B cell (primary cell): ENCODE measurements at regions of chr20 and their contacts with region 1.

Region 1: DNA sequence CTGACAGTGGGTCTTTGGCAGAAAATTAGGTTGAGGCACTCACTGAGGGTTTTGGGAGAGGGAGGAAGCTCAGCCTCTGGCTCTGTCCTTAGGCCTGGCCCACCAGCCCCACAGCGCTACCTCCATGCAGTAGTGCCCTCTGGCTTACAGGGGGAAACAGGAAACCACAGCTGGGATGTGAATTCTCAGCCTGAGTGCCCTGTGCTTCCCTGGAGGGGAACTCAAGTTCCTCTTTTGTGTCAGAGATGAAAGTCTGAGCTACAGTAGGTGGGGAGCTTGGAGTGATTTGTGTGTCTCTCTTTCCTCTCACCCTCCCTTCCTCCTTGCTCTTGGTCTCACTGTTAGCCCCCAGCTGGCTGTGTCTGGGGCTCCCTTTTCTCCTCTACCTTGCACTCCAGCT is 48.2 kb upstream of the BLCAP start:
- DNase-seq: peak; percentile 51
- ATAC-seq: peak; percentile 65
- H3K4me3 ChIP-seq: no peak overlapping the region
- H3K4me3 Mint-ChIP-seq: no peak overlapping the region
- H3K27ac ChIP-seq: peak overlapping the region in 1 of 2 donors; percentile 4
- H3K27ac Mint-ChIP-seq: no peak overlapping the region
- H3K4me1 ChIP-seq: peaks cover 19 to 20% of the 10 kb centered on the region in 2 donors
- H3K4me1 Mint-ChIP-seq: peaks cover 26% of the 10 kb centered on the region
- H3K27me3 ChIP-seq: peaks cover 0 to 9% (median under 1%) of the 10 kb centered on the region in 4 experiments
- H3K27me3 Mint-ChIP-seq: peaks cover 13% of the 10 kb centered on the region
- CTCF ChIP-seq: no peak

Region 2: DNA sequence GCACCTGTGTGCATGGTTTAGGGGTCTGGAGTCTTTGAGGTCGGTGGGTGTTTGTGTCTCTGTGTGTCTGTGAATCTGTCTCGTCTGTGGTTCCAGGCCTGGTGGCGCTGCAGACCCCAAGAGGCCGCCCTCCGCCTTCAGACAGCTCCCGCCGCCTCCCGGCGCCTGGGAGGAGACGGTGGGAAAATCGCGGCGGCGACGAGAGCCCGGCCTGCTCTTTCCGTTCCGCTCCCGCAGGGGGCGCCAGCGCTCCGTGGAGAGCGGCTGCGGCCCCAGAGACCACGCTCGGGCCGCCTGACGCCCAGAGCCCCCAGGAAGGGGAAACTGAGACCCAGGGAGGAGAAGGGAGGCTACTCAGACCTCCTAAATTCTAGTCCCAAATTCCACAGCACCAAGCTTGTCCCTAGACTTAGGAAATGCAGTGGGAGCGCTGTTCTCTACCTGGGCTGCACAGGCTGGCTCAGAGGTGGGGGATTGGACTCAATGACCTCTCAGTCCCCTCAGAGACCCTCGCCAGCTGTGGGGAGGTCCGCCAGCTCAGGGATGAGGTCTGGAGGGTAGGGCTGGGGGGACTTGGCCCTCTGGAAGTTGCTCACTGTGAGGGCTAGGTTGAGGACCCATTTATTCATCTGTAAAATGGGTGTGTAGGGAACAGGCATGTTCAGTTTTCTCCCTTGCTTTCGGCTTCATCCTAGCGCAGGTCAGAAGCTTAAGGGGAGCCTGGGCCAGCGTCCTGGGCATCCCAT is 11.3 kb before region 1 on chr20:
- CTCF ChIA-PET with region 1: interaction called, 19 read pairs
- POLR2A ChIA-PET with region 1: no interaction called
- intact Hi-C with region 1: no loop called
- DNase-seq: peak; percentile 67
- ATAC-seq: peak; percentile 49
- H3K4me3 ChIP-seq: no peak overlapping the region
- H3K4me3 Mint-ChIP-seq: no peak overlapping the region
- H3K27ac ChIP-seq: no peak overlapping the region
- H3K27ac Mint-ChIP-seq: no peak overlapping the region
- H3K4me1 ChIP-seq: peaks cover 3 to 5% of the 10 kb centered on the region in 2 donors
- H3K4me1 Mint-ChIP-seq: peaks cover 2% of the 10 kb centered on the region
- H3K27me3 ChIP-seq: peaks cover 0 to 31% (median 13%) of the 10 kb centered on the region in 4 experiments
- H3K27me3 Mint-ChIP-seq: peaks cover 43% of the 10 kb centered on the region
- CTCF ChIP-seq: peak; percentile 96

Region 3: DNA sequence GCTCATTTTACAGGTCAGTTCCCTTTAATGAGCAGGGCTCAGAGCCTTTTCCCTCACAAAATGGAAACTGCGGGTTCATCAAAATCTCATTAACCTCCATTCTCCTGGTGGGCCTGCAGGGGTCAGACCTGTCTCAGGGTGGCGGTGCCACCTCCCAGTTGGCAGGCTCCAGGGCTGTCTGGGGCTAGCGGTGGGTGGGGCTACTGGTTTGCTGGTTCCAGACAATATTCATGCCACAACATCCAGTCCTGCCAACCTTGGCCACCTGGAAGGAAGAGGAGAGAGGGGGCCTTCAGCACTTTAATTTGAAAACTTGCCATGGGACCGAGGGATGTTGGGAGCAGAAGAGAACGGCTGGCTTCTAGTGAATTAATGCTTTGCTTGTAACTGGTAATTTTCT is 76.0 kb after region 1 on chr20:
- CTCF ChIA-PET with region 1: no interaction called
- POLR2A ChIA-PET with region 1: no interaction called
- intact Hi-C with region 1: no loop called
- DNase-seq: peak; percentile 57
- ATAC-seq: peak; percentile 66
- H3K4me3 ChIP-seq: no peak overlapping the region
- H3K4me3 Mint-ChIP-seq: no peak overlapping the region
- H3K27ac ChIP-seq: no peak overlapping the region
- H3K27ac Mint-ChIP-seq: no peak overlapping the region
- H3K4me1 ChIP-seq: no peaks in the 10 kb centered on the region
- H3K4me1 Mint-ChIP-seq: no peaks in the 10 kb centered on the region
- H3K27me3 ChIP-seq: peaks cover 0 to 8% (median 4%) of the 10 kb centered on the region in 4 experiments
- H3K27me3 Mint-ChIP-seq: peaks cover 28% of the 10 kb centered on the region
- CTCF ChIP-seq: peak; percentile 51

Region 4: DNA sequence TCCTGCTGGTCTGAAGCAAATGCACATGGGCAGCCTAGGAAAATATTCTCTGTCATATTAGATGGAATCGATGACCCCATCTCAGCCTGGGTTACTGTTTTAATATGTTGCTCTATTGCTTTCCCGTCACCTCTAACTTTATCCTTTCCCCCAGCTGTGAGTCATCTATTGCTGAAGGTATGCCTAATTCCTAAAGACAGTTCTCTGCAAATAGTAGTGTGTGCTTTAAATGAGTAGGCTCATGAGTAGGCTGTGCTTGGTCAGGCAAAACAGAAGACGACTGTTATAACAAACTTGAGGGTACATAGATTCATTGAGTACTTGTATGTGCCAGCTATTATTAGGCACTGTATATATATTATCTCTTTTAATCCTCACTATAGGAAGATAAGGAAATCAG is 165.2 kb after region 1 on chr20:
- CTCF ChIA-PET with region 1: no interaction called
- POLR2A ChIA-PET with region 1: no interaction called
- intact Hi-C with region 1: loop called (anchors 10 kb)
- DNase-seq: no peak
- ATAC-seq: no peak
- H3K4me3 ChIP-seq: no peak overlapping the region
- H3K4me3 Mint-ChIP-seq: no peak overlapping the region
- H3K27ac ChIP-seq: no peak overlapping the region
- H3K27ac Mint-ChIP-seq: no peak overlapping the region
- H3K4me1 ChIP-seq: peaks cover 0 to 3% of the 10 kb centered on the region in 2 donors
- H3K4me1 Mint-ChIP-seq: peaks cover 24% of the 10 kb centered on the region
- H3K27me3 ChIP-seq: no peaks in the 10 kb centered on the region
- H3K27me3 Mint-ChIP-seq: no peaks in the 10 kb centered on the region
- CTCF ChIP-seq: no peak